ENCODE measurements at regions of chr1 and their contacts with region 1.

Region 1: GRCh38 chr1:8660411-8660828 is 157.0 kb downstream of the RERE start:
- DNase-seq: peak; percentile 77
- H3K4me3 ChIP-seq: no peak overlapping the region
- H3K27ac ChIP-seq: peak overlapping the region; percentile 60
- H3K4me1 ChIP-seq: peaks cover 29% of the 10 kb centered on the region
- H3K27me3 ChIP-seq: no peaks in the 10 kb centered on the region
- CTCF ChIP-seq: no peak

Region 2: DNA sequence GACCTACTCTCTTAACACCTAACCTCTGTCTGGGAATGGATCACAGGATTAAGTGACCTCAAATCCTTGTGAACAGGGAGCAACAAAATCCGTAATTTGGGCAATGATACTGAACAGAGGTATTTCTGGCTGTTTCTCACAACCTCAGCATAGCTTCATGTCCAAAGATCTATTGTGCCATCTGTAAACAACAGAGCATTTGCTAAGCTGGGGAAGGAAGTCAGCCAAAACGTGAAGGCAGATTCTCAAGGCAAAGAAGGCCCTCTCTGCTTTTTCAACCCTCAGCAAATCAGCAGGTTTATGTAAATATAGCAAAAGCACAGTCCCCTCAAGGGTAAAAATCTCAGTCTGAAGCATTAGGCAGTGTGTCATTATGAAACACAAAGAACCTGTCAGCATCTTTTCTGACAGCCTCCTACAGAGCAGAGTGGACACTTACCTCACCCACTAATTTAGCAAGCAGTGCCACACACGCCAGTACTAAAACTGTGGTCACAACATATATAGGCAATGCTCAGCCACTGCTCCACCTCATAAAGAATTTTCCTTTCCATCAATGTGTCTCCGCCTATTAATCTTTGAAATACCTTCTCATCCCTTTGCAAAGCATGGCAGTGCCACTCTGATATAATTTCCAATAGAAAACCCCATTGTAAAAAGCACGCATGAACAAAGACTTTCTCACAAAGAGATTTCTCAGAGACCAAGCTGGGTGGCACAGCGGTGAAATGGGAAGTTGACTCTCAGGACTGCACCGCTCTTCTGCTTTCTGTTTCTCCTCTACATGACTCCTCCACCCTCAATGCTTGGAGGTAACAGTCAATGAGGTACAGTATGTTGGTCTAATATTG is 31.0 kb before region 1 on chr1:
- CTCF ChIA-PET with region 1: no interaction called
- dilution Hi-C with region 1: no loop called
- in situ Hi-C with region 1: no loop called
- intact Hi-C with region 1: loop called (anchors 5 kb)
- DNase-seq: no peak
- H3K4me3 ChIP-seq: no peak overlapping the region
- H3K27ac ChIP-seq: no peak overlapping the region
- H3K4me1 ChIP-seq: peaks cover 15% of the 10 kb centered on the region
- H3K27me3 ChIP-seq: no peaks in the 10 kb centered on the region
- CTCF ChIP-seq: no peak